HepG2 (cell line): ENCODE measurements at regions of chr3 and their contacts with region 1.

Region 1: DNA sequence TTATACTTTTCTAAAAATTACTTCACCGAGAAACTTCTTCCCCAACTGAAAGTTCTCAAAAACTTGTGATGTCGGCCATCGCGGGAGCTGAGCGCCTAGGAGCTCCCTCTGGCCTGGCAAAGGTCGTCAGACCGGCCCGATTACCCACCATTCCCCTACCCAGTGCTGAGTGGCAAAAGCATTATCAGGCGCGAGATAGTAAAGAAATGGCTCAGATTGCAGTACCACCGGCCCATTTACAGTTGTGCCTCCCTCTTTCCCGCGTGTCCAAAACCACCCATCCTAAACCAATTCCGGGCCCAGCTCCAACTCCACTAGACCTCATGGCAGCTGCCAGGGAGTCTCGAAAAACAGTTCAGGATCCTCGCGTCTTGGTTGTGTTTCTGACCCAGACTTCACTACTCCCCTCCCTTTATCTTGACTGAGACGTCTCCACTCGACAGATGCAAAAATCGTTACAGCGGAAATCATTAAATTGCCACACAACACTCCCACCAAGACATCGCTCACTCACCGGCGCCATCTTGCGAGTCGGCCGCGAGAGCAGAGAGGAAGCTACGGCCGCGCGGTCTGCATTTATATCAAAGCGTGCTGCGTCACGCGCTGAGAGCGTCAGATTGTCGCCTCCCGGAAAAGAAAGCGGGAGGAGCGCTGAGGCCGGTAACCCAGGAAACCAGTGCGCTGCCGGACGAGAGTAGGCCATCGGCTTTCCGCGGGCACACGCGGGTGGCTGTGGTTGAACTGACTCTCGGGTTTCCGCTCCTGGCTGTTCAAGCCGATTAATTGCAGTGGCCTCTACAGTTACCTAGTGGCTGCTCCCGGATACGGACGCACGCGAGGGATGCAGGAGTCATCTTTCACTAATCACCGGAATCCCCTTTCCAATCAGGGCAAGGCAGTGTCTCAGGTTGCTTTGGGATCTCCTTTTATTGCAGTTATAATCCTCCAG is at the start of gene RPL22L1:
- DNase-seq: peak; percentile 90
- ATAC-seq: peak; percentile 94
- H3K4me3 ChIP-seq: peak within 1 kb of the TSS; percentile 68 to 87 (median 84)
- H3K27ac ChIP-seq: peak within 1 kb of the TSS; percentile 88
- H3K4me1 ChIP-seq: peaks cover 32% of the 10 kb centered on the region
- H3K27me3 ChIP-seq: no peaks in the 10 kb centered on the region
- CTCF ChIP-seq: peak; percentile 53
- EP300 ChIP-seq: 0 out of 4 replicates have a peak, but pooled peaks of 1 of the 2 experiments have one; percentile 6
- POLR2A ChIP-seq: peak; percentile 98 to 99
- RAD21 ChIP-seq: no peak; the same call in 1 of the 2 replicates
- total RNA-seq, gene RPL22L1: 150 and 152 TPM in 2 replicates

Region 2: DNA sequence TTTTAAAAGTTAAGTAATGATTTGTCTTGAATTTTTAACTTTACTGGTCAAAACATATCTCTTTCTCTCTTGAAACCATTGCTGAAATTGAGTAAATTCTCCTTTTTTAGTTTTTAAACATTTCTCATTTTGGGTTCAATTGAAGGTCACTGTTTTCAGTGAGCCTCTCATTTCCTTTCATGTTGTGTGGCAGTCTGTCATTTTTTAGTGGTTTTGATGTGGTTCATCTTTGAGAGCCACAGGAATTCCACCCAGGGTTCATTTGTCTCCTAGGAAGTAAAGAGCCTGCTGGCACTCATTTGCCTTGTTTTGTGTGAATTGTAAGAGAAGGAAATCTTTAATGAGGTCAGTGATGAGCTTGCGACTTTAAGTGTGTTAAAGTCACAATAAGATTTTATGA is 440.9 kb before region 1 on chr3:
- CTCF ChIA-PET with region 1: no interaction called
- POLR2A ChIA-PET with region 1: interaction called, 3 read pairs
- in situ Hi-C with region 1: no loop called
- intact Hi-C with region 1: loop called (anchors 5 kb)
- DNase-seq: peak; percentile 74
- ATAC-seq: no peak
- H3K4me3 ChIP-seq: no peak overlapping the region
- H3K27ac ChIP-seq: no peak overlapping the region
- H3K4me1 ChIP-seq: peaks cover 59% of the 10 kb centered on the region
- H3K27me3 ChIP-seq: no peaks in the 10 kb centered on the region
- CTCF ChIP-seq: no peak
- EP300 ChIP-seq: peak in 1 of 2 experiments; percentile 55; a peak in 1 of 4 replicates
- POLR2A ChIP-seq: no peak
- RAD21 ChIP-seq: no peak

Region 3: DNA sequence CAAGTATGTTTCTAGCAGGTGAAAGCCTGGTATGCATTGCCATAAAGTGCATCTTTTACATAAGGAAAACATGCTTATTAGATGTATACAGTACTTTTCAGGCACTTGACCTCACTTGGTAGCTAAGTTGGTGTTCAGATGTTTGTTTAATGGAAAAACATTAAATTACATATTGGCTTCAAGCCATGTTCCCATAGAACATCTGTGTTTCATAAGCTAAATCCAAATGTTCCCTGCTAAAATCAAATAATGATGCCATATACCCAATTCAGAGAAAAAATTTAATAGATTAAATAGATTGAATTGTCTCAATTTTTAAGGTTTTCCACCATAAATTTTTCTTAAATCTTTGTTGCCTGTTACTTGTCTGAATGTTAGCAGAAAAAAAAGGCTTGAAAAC is 19.2 kb after region 1 on chr3:
- CTCF ChIA-PET with region 1: no interaction called
- POLR2A ChIA-PET with region 1: interaction called, 27 read pairs
- in situ Hi-C with region 1: no loop called
- intact Hi-C with region 1: no loop called
- DNase-seq: no peak
- ATAC-seq: no peak
- H3K4me3 ChIP-seq: no peak overlapping the region
- H3K27ac ChIP-seq: no peak overlapping the region
- H3K4me1 ChIP-seq: no peaks in the 10 kb centered on the region
- H3K27me3 ChIP-seq: no peaks in the 10 kb centered on the region
- CTCF ChIP-seq: no peak
- EP300 ChIP-seq: no peak
- POLR2A ChIP-seq: no peak
- RAD21 ChIP-seq: no peak

Region 4: GRCh38 chr3:170908235-170909116 is 38.6 kb after region 1 on chr3 and contains the start of gene EIF5A2:
- CTCF ChIA-PET with region 1: no interaction called
- POLR2A ChIA-PET with region 1: interaction called, 30 read pairs
- in situ Hi-C with region 1: no loop called
- intact Hi-C with region 1: loop called (anchors 2 kb)
- DNase-seq: peak; percentile 84
- ATAC-seq: peak; percentile 95
- H3K4me3 ChIP-seq: peak within 1 kb of the TSS; percentile 57 to 87 (median 82)
- H3K27ac ChIP-seq: no peak within 1 kb of the TSS
- H3K4me1 ChIP-seq: peaks cover 36% of the 10 kb centered on the region
- H3K27me3 ChIP-seq: no peaks in the 10 kb centered on the region
- CTCF ChIP-seq: 0 out of 2 replicates have a peak, but pooled peaks have one; percentile 6
- EP300 ChIP-seq: no peak
- POLR2A ChIP-seq: peak; percentile 15 to 28; a peak in 1 of 4 replicates
- RAD21 ChIP-seq: 0 out of 2 replicates have a peak, but pooled peaks have one; percentile 5
- total RNA-seq, gene EIF5A2: 9.4 and 17.1 TPM in 2 replicates

Region 5: DNA sequence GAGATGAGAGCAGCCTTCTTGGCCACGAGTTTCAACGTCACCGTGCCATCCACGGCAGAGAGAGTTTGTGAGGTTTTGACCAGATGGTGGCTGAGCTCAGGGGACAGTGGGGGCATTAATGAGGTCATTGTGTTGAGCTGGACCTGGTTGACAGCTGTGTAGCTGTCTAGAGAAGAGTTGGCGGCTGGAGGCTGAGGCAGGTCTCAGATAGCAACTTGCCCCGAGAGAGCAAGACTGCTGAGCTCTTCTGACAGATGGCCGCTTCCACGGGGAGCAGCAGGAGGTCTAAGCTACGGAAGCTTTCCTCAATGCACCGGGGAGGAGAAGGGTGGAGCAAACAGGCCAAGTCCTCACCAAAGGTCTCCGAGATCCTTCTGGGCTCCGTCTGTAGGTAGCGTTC is 83.3 kb after region 1 on chr3:
- CTCF ChIA-PET with region 1: no interaction called
- POLR2A ChIA-PET with region 1: no interaction called
- in situ Hi-C with region 1: no loop called
- intact Hi-C with region 1: no loop called
- DNase-seq: no peak
- ATAC-seq: no peak
- H3K4me3 ChIP-seq: no peak overlapping the region
- H3K27ac ChIP-seq: no peak overlapping the region
- H3K4me1 ChIP-seq: no peaks in the 10 kb centered on the region
- H3K27me3 ChIP-seq: peaks cover 0 to 8% of the 10 kb centered on the region in 2 experiments; a peak in 1 of 5 replicates
- CTCF ChIP-seq: no peak
- EP300 ChIP-seq: no peak
- POLR2A ChIP-seq: no peak
- RAD21 ChIP-seq: no peak